ENCODE measurements at regions of chr7 and their contacts with region 1.

Region 1: GRCh38 chr7:108109221-108109908 is 20.8 kb downstream of the LAMB4 start:
- DNase-seq: no peak
- H3K4me3 ChIP-seq: no peak overlapping the region
- H3K27ac ChIP-seq: no peak overlapping the region
- H3K27me3 ChIP-seq: no peaks in the 10 kb centered on the region
- CTCF ChIP-seq: peak in 45 of 56 donors; percentile 9 to 63 (median 37)

Region 2: DNA sequence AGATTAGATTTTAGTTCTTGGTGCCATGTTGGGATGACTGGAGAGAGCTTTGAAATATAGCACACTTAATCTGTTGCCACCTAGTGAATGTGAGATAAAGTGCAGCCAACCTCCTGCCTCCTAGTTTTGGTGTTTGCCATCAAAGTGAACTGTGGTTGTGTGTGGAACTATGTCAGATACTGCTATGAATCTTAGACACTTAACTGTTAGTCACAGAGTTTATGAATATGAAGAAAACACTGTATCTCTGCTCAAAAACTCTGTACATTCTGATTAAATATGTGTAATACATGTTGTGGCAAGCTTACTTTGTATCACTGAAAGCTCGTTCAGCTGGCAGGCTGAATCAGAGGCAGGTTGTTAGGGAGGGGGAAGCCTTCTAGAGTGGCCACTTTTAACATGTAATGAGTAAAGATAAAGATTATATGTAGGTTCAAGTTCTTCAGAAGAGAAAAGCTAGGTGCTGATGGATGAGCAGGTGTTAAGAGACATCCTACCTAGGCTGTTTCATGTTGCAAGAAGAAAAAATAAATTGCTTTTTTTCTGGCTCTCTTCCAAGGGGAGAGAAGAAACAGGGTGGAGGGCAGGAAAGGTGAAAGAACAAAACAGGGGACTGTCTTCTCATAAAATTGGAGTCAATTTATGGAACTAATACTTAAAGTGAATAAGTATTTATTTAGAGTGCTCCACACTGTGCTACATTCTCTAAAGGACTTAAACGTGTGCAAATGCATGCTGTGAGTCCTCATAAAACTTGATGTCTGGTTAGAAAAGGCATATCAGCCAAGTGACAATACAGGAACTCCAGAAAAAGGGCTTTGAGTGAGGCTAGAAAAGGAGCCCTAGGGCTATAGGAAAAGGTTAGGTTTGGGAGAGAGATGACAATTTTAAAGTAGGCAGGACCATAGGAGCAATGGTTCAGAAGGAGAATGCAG is 92.3 kb before region 1 on chr7:
- intact Hi-C with region 1: no loop called
- DNase-seq: no peak
- H3K4me3 ChIP-seq: no peak overlapping the region
- H3K27ac ChIP-seq: no peak overlapping the region
- H3K27me3 ChIP-seq: peaks cover 0 to 15% (median 0%) of the 10 kb centered on the region in 45 donors
- CTCF ChIP-seq: peak in 29 of 56 donors; percentile 7 to 46 (median 26)

Region 3: GRCh38 chr7:108146070-108146837 is 36.9 kb after region 1 on chr7:
- intact Hi-C with region 1: loop called in 1 of 2 experiments (anchors 5 kb)
- DNase-seq: peak in 8 of 10 donors; percentile 45 to 75 (median 56)
- H3K4me3 ChIP-seq: peak overlapping the region in 52 of 59 donors; percentile 16 to 61 (median 38)
- H3K27ac ChIP-seq: peak overlapping the region in 29 of 59 donors; percentile 1 to 79 (median 29)
- H3K27me3 ChIP-seq: no peaks in the 10 kb centered on the region
- CTCF ChIP-seq: peak; percentile 62 to 91 (median 83)